Activated naive CD4-positive, alpha-beta T cell treated with anti-CD3 and anti-CD28 coated beads, Interleukin-2, amount 10 ng/mL, durations not matched to agents 7 days and 5 days (primary cell): ENCODE measurements at regions of chr5 and their contacts with region 1.

Region 1: DNA sequence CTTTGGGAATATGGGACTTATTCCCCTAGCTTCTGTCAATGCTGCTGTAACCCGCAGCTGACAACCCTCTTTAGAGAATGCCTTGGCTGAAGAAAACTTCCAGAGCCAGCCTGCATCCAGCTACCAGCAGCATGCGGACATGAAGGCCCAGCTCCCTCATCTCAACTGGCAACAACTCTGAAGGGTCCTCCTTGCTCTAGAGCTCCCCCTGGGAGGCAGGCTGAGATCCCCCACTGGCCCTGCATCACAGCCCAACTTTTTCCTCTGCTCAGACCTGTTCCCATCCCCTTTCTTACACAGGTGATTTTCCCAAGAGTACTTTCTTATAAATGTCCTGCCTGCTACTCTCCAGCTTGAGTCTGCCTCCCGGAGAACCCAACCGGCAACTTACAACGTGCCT is 18.7 kb upstream of the WNT8A start:
- DNase-seq: no peak
- H3K4me3 Mint-ChIP-seq: no peak overlapping the region
- H3K27ac Mint-ChIP-seq: no peak overlapping the region
- H3K4me1 Mint-ChIP-seq: peaks cover 4% of the 10 kb centered on the region
- H3K27me3 Mint-ChIP-seq: no peaks in the 10 kb centered on the region

Region 2: GRCh38 chr5:137778772-137779564 is 286.1 kb before region 1 on chr5:
- CTCF ChIA-PET with region 1: interaction called, 40 read pairs
- DNase-seq: no peak
- H3K4me3 Mint-ChIP-seq: no peak overlapping the region
- H3K27ac Mint-ChIP-seq: no peak overlapping the region
- H3K4me1 Mint-ChIP-seq: no peaks in the 10 kb centered on the region
- H3K27me3 Mint-ChIP-seq: peaks cover 6% of the 10 kb centered on the region

Region 3: DNA sequence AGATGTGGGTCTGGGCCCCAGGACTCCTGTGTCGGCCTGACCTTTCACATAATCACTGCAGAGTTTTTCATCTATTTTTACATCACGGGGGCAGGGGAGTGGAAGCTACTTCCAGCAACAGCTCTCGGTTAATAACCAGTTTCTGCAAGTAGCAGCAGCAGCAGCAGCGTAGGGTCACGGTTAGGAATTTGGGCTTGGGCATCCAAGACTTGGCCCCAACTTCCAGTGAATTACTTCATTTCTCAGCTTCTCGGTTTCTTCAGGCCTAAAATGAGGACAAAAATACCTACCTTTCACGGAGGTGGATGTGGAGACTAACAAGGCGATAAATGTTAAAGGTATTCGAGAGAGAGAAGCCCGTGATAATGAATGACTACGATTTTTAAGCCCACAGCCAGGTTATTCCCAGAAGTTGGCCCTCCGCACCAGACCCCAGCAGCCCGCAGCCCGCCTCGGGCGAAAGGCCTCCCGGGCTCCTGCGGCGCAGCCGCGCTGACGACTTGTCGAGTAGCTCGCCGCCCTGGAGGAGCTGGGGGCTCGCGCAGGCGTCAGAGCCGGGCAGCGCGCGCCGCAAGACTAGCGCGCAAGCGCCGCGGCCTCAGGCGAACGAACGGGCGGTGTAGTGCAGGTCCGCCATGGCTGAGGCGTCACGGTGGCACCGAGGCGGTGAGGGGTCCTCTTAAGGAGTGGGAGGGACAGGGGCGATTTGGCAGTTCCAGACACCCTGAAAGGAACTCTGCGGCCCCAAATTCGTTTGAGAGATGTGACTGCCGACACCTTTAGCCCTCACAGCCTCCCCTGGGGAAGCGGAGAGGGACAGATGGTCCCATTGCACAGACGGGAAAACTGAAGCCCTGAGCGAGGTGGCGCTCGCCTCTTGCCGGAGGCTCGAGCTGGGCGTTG is 176.0 kb before region 1 on chr5 and contains the start of gene PKD2L2:
- CTCF ChIA-PET with region 1: no interaction called
- DNase-seq: peak; percentile 83
- H3K4me3 Mint-ChIP-seq: peak within 1 kb of the TSS; percentile 76
- H3K27ac Mint-ChIP-seq: peak within 1 kb of the TSS; percentile 89
- H3K4me1 Mint-ChIP-seq: peaks cover 21% of the 10 kb centered on the region
- H3K27me3 Mint-ChIP-seq: peaks cover 11% of the 10 kb centered on the region

Region 4: DNA sequence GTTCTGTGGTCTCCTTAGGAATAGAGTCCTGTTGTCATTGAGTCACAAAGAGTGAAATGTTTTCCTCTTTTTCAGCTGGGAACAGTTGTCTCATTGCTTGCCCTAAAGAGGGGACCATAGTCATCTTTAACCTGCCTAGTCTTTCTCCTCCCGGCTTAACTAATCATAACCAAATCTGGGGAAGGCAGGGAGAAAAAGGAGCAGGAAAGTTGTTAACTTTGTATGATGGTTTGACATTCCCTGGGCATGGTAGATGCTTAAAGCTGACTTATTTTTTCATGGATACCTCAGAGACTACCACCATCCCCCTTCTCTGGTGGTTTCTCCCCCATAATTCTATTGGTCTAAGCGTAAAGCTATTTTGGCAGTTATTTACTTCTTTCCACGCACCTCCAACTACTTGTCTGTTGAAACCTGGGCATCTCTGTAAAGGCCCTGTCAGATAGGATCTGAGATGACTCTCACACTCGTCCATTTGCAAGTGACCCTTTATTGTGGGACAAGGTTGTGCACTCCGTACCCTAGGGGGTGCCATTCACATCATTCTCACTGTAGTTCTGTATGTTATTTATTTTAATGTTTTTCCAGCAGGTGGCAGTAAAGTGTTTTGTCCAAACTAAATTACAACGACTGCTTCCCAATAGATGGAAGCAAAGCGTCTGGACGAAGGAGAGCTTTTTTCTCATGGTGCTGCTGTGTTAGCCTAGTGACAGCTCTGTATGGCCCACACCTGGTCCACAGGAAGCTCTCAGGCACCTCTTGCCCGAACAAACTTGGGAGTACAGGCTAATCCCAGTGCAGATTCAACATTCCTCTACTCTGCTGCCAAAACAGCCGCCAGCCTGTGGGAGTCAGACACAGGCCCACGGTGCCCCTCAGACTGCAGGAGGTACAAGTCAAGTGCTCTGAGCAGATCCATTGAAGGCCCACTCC is 29.2 kb before region 1 on chr5:
- CTCF ChIA-PET with region 1: interaction called, 193 read pairs
- DNase-seq: peak; percentile 76
- H3K4me3 Mint-ChIP-seq: no peak overlapping the region
- H3K27ac Mint-ChIP-seq: no peak overlapping the region
- H3K4me1 Mint-ChIP-seq: peaks cover 27% of the 10 kb centered on the region
- H3K27me3 Mint-ChIP-seq: peaks cover 5% of the 10 kb centered on the region

Region 5: GRCh38 chr5:138054847-138055558 is 10.1 kb before region 1 on chr5:
- CTCF ChIA-PET with region 1: interaction called, 17 read pairs
- DNase-seq: no peak
- H3K4me3 Mint-ChIP-seq: no peak overlapping the region
- H3K27ac Mint-ChIP-seq: no peak overlapping the region
- H3K4me1 Mint-ChIP-seq: peaks cover 8% of the 10 kb centered on the region
- H3K27me3 Mint-ChIP-seq: peaks cover 17% of the 10 kb centered on the region

Region 6: GRCh38 chr5:138077065-138077696 is 12.1 kb after region 1 on chr5:
- CTCF ChIA-PET with region 1: interaction called, 24 read pairs
- DNase-seq: peak; percentile 71
- H3K4me3 Mint-ChIP-seq: no peak overlapping the region
- H3K27ac Mint-ChIP-seq: no peak overlapping the region
- H3K4me1 Mint-ChIP-seq: peaks cover 18% of the 10 kb centered on the region
- H3K27me3 Mint-ChIP-seq: peaks cover 3% of the 10 kb centered on the region

Region 7: GRCh38 chr5:138128334-138128733 is 63.2 kb after region 1 on chr5:
- CTCF ChIA-PET with region 1: interaction called, 11 read pairs
- DNase-seq: no peak
- H3K4me3 Mint-ChIP-seq: no peak overlapping the region
- H3K27ac Mint-ChIP-seq: no peak overlapping the region
- H3K4me1 Mint-ChIP-seq: peaks cover 3% of the 10 kb centered on the region
- H3K27me3 Mint-ChIP-seq: peaks cover 19% of the 10 kb centered on the region